WTC11 (cell line): ENCODE measurements at regions of chr10 and their contacts with region 1.

Region 1: DNA sequence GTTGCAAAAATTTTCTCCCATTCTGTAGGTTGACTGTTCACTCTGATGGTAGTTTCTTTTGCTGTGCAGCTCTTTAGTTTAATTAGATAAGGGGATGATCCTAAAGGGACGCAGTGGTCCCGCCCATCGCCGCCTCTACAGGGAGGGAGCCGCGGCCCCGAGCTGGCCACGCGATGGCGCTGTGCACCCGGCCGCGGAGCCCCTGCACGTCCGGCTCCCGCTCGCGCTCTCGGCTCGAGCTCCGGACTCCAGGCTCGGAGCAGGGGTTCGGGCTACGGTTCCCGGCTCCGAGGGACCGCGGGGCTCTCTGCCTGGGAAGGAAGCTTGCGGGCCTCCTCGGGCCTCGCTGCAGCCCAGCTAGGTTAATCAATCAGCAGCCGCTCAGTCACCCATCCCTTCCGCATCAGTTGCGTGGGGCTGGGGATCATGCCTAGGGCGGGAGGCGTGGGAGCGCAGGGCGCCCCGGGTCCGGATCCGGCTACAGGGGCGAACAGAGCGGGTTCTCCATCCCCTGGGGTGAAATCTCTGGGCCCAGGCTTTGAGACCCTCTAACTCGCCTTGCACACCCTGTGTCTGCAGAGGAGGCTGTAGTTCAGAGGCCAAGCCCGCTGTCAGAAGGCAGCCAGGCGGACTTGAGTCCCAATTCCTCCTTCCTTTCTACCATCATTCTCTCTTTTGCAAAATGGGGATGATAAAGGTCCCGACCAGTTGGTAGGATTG is 97.9 kb downstream of the WDR11 start:
- DNase-seq: peak; percentile 81
- ATAC-seq: peak; percentile 88
- H3K4me3 Mint-ChIP-seq: peak overlapping the region; percentile 70
- H3K27ac Mint-ChIP-seq: no peak overlapping the region
- H3K4me1 Mint-ChIP-seq: peaks cover 22% of the 10 kb centered on the region
- H3K27me3 Mint-ChIP-seq: peaks cover 28% of the 10 kb centered on the region
- CTCF ChIP-seq: peak; percentile 74

Region 2: DNA sequence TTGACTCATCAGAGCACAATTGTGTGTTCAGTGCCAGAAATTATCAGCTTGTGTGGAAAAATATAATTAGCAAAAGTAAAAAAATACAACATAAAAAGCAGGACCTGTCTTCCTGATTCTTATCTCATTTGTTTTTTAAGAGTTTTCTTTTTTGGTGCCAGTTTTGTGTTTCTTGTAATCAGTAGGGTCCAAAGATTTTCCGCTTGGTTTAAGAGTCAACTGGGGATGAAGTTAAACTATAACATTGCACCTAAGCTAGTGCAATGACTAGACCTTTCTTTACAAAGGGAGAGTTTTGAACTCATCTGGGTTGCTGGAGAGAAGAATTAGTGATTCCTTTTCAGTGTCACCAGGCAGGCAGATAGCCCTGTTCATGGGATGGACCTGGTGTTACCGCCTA is 378.6 kb before region 1 on chr10:
- CTCF ChIA-PET with region 1: no interaction called
- POLR2A ChIA-PET with region 1: no interaction called
- DNase-seq: no peak
- ATAC-seq: no peak
- H3K4me3 Mint-ChIP-seq: no peak overlapping the region
- H3K27ac Mint-ChIP-seq: no peak overlapping the region
- H3K4me1 Mint-ChIP-seq: peaks cover 13% of the 10 kb centered on the region
- H3K27me3 Mint-ChIP-seq: no peaks in the 10 kb centered on the region; the same call in 1 of the 2 replicates
- CTCF ChIP-seq: no peak

Region 3: DNA sequence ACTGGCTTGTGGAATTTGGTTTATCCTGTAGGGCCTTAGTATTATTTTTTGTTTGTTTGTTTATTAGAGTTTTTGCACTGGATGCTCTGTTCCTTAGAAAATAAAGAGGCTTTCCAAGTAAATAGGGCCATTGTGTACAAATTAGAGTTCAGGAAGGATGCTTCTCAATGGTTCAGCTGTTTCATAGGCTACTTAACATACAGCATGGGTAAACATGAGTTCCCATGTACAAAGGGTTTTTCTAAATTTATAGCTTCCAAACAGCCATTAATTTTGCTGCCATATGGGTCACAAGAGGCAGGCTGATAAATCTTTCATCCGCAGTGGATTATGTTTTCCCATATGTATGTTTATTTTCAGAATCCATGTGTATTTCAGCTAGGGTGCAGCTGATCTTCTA is 219.5 kb before region 1 on chr10:
- CTCF ChIA-PET with region 1: no interaction called
- POLR2A ChIA-PET with region 1: no interaction called
- DNase-seq: no peak
- ATAC-seq: no peak
- H3K4me3 Mint-ChIP-seq: no peak overlapping the region
- H3K27ac Mint-ChIP-seq: no peak overlapping the region
- H3K4me1 Mint-ChIP-seq: no peaks in the 10 kb centered on the region
- H3K27me3 Mint-ChIP-seq: no peaks in the 10 kb centered on the region
- CTCF ChIP-seq: no peak

Region 4: DNA sequence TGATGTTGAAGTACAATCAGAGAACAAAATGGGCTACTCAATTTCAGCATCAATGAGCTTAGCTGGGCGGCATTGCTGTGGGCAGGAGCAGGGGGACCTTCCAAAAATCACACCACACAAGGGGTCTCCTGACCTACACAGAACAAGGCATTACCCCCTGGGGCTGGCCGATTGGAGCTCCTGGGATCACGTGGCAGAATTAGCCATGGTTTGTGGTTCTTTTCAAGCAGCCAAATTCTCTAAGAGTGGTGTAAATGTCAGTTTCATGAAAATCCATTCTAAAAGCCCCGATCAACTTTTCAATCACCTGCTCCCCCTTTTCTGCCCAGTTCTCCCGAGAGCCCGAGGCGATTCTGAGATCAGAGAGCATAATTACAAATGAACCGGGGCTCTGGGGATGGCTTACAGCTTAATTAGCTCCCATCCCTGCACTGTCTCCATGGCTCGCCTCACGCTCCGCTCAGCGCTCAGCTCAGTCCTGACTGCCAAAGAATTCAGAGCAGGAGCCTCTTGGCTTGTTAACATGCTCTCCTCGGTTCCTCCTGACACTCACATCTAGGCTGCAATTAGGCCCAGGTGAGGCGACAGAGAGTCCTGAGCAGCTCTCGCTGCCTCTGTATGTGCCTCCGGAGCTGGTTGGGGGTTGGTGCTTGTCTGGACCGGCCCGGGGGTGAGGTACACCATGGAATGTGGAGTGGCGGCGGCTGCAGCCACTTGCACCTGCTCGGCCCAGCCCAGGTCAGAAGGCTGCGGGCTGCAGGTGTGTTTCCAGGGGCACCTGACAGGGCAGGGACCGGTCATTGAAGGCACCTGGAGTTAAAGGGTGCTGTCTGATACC is 13.9 kb after region 1 on chr10:
- CTCF ChIA-PET with region 1: interaction called, 31 read pairs
- POLR2A ChIA-PET with region 1: no interaction called
- DNase-seq: peak; percentile 67
- ATAC-seq: peak; percentile 93
- H3K4me3 Mint-ChIP-seq: no peak overlapping the region
- H3K27ac Mint-ChIP-seq: no peak overlapping the region; the same call in 1 of the 2 replicates
- H3K4me1 Mint-ChIP-seq: peaks cover 21% of the 10 kb centered on the region
- H3K27me3 Mint-ChIP-seq: no peaks in the 10 kb centered on the region
- CTCF ChIP-seq: no peak

Region 5: GRCh38 chr10:120999868-121000267 is 50.8 kb after region 1 on chr10:
- CTCF ChIA-PET with region 1: interaction called, 14 read pairs
- POLR2A ChIA-PET with region 1: no interaction called
- DNase-seq: no peak
- ATAC-seq: peak; percentile 67
- H3K4me3 Mint-ChIP-seq: no peak overlapping the region
- H3K27ac Mint-ChIP-seq: no peak overlapping the region
- H3K4me1 Mint-ChIP-seq: peaks cover 7% of the 10 kb centered on the region
- H3K27me3 Mint-ChIP-seq: peaks cover 4% of the 10 kb centered on the region; the same call in 1 of the 2 replicates
- CTCF ChIP-seq: no peak

Region 6: GRCh38 chr10:121015916-121016315 is 66.9 kb after region 1 on chr10:
- CTCF ChIA-PET with region 1: no interaction called
- POLR2A ChIA-PET with region 1: no interaction called
- DNase-seq: no peak
- ATAC-seq: no peak
- H3K4me3 Mint-ChIP-seq: no peak overlapping the region
- H3K27ac Mint-ChIP-seq: no peak overlapping the region
- H3K4me1 Mint-ChIP-seq: no peaks in the 10 kb centered on the region; the same call in 1 of the 2 replicates
- H3K27me3 Mint-ChIP-seq: no peaks in the 10 kb centered on the region
- CTCF ChIP-seq: no peak

Region 7: DNA sequence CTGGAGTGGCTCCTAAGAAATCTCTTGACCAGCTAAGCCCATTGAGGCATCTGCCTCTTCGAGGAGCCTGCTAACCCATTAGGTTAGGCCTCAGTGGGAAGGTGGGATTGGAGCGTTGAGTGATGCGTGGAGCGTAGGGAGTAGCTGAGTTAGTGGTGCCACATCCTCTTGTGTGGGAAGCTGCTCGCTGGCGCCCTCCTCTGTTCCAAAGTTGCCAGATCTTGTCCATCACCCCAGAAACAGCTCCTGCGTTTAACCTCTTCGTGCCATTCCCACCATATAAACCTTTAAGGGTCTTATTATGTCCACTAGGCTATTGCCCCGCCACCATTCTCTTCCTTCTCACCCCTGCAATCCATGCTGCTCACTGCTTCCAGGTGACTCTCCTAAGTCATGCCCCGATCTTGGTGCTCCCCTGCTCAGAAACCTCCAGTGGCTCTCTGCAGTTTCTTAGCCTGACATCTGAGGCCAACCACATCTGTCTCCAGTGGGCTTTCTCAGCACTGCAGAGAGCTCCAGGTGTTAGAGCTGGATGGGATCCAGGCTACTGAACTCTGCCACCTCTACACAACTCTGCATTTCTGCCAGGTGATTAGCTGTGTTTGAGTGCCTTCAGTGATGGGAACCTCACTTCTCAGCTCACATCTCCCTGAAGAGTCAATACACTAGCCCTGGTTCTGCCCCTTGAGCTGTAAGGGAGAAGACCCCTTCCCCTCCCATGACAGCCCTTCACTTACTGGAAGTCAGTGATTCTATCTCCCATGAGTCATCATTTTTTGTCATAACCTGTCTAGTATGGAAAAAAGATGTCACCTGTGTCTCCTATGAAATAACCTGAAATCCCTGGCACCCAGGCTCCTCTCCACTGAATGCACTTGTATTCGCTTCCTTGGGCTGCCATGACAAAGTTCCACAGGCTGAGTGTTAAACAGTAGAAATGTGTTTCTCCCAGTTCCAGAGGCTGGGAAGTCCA is 714.2 kb after region 1 on chr10:
- CTCF ChIA-PET with region 1: interaction called, 14 read pairs
- POLR2A ChIA-PET with region 1: no interaction called
- DNase-seq: peak; percentile 80
- ATAC-seq: peak; percentile 93
- H3K4me3 Mint-ChIP-seq: no peak overlapping the region
- H3K27ac Mint-ChIP-seq: no peak overlapping the region
- H3K4me1 Mint-ChIP-seq: peaks cover 6% of the 10 kb centered on the region
- H3K27me3 Mint-ChIP-seq: no peaks in the 10 kb centered on the region; the same call in 1 of the 2 replicates
- CTCF ChIP-seq: peak; percentile 85

Region 8: GRCh38 chr10:121900443-121901174 is 951.6 kb after region 1 on chr10:
- CTCF ChIA-PET with region 1: interaction called, 10 read pairs
- POLR2A ChIA-PET with region 1: no interaction called
- DNase-seq: no peak
- ATAC-seq: peak; percentile 86
- H3K4me3 Mint-ChIP-seq: no peak overlapping the region
- H3K27ac Mint-ChIP-seq: peak overlapping the region; percentile 52; the same call in 1 of the 2 replicates
- H3K4me1 Mint-ChIP-seq: peaks cover 12% of the 10 kb centered on the region
- H3K27me3 Mint-ChIP-seq: no peaks in the 10 kb centered on the region
- CTCF ChIP-seq: peak; percentile 45